Panc1 (cell line): ENCODE measurements at regions of chr1 and their contacts with region 1.

Region 1: GRCh38 chr1:83905315-83905907 is 93.5 kb downstream of the TTLL7 start:
- DNase-seq: peak; percentile 43
- ATAC-seq: no peak
- H3K4me3 ChIP-seq: no peak overlapping the region
- H3K27ac ChIP-seq: no peak overlapping the region
- H3K4me1 ChIP-seq: no peaks in the 10 kb centered on the region
- H3K27me3 ChIP-seq: no peaks in the 10 kb centered on the region
- CTCF ChIP-seq: peak; percentile 81; the same call in 1 of the 2 replicates

Region 2: GRCh38 chr1:83990749-83991148 is 85.3 kb after region 1 on chr1:
- CTCF ChIA-PET with region 1: no interaction called
- POLR2A ChIA-PET with region 1: no interaction called
- in situ Hi-C with region 1: no loop called
- intact Hi-C with region 1: no loop called
- DNase-seq: no peak
- ATAC-seq: no peak
- H3K4me3 ChIP-seq: no peak overlapping the region
- H3K27ac ChIP-seq: no peak overlapping the region
- H3K4me1 ChIP-seq: no peaks in the 10 kb centered on the region
- H3K27me3 ChIP-seq: no peaks in the 10 kb centered on the region
- CTCF ChIP-seq: peak; percentile 41; the same call in 1 of the 2 replicates

Region 3: GRCh38 chr1:84620720-84621313 is 715.4 kb after region 1 on chr1:
- CTCF ChIA-PET with region 1: no interaction called
- POLR2A ChIA-PET with region 1: no interaction called
- in situ Hi-C with region 1: loop called (anchors 25 kb)
- intact Hi-C with region 1: no loop called
- DNase-seq: no peak
- ATAC-seq: peak; percentile 97
- H3K4me3 ChIP-seq: peak overlapping the region; percentile 56 to 61
- H3K27ac ChIP-seq: peak overlapping the region; percentile 80
- H3K4me1 ChIP-seq: peaks cover 9% of the 10 kb centered on the region; the same call in 1 of the 2 replicates
- H3K27me3 ChIP-seq: no peaks in the 10 kb centered on the region
- CTCF ChIP-seq: peak; percentile 100